ENCODE measurements at regions of chr11 and their contacts with region 1.

Region 1: DNA sequence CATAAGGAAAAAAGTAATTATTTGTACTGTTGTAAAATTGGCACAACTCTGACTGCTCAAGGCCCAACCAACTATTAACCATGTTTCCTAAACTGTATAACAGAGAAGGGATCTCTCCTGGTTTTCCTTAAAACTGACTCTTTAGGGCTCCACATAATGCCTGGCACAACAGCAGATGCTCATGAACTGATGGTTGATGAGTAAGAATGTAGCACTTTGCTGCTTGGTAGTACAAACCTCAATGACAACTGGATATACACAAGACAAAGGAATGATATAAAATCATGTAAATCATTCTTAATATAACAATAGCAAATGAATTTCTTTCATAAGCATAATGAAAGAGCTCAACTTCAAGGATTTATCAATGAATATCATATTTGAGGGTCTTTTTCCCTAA is 11.7 kb downstream of the MSANTD2 start:
- DNase-seq: no peak
- H3K4me3 ChIP-seq: no peak overlapping the region
- CTCF ChIP-seq: no peak

Region 2: GRCh38 chr11:124800226-124800929 is 11.9 kb after region 1 on chr11 and contains the start of gene MSANTD2:
- CTCF ChIA-PET with region 1: interaction called, 62 read pairs
- POLR2A ChIA-PET with region 1: no interaction called
- DNase-seq: peak; percentile 17
- H3K4me3 ChIP-seq: peak within 1 kb of the TSS; percentile 82
- CTCF ChIP-seq: no peak

Measured in AG04449 (cell line).